ENCODE measurements at regions of chr1 and their contacts with region 1.

Region 1: DNA sequence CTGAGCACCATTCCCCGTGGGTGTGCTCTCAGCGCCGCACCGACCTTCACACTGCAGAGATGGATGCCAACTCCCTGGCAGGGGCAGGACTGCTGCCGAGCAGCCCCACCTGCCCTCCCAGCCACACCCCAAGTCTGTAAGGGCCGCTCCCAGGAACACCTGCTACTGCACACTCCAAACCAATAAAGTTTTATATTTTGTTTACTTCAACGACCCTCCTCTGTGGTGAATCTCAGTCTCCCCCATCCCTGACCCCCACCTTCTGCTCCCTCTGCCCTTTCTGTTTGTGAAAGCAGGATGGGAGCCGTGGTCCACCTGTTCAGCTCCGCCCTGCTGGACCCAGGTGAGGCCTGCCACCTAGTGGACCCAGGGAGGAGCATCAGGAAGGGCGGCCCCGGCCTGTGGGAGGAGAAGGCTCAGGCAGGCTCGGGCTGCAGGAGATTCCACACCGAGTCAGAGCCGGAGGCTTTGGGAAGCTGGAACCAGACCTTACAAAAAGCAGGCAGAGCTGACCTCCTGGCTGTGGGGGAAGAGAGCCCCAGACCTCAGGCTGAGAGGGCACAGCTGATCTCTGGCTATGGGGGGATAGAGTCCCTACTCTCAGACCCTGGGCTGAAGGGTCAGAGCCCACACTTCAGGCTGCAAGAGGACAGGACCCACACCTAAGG is 982 bp upstream of the TMEM82 start:
- DNase-seq: peak; percentile 63 to 88
- H3K4me3 ChIP-seq: no peak overlapping the region
- H3K27ac ChIP-seq: no peak overlapping the region
- H3K4me1 ChIP-seq: no peaks in the 10 kb centered on the region
- H3K27me3 ChIP-seq: no peaks in the 10 kb centered on the region
- CTCF ChIP-seq: peak; percentile 82

Region 2: DNA sequence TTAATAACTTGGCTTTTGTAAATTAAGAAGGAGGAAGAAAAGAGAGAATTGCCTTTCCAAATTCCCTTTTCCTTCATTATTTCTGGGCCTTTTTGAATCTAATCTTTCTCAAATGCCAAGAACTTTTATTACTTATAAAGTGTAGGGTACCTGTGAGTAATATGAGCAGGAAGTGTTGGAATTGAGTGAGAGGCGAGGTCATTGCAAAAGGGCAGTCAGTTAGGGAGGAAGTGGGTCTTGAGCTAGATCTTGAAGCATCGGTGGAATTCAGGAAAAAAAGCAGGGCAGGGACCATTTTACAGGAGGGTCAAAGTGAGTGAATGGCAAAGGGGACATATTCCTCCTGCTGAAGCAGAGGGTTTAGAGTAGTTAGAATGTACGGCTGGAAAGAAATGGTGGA is 100.7 kb before region 1 on chr1:
- CTCF ChIA-PET with region 1: no interaction called
- POLR2A ChIA-PET with region 1: no interaction called
- intact Hi-C with region 1: no loop called
- DNase-seq: no peak
- H3K4me3 ChIP-seq: no peak overlapping the region
- H3K27ac ChIP-seq: 0 out of 2 replicates have a peak overlapping the region, but pooled peaks have one; percentile 16
- H3K4me1 ChIP-seq: no peaks in the 10 kb centered on the region
- H3K27me3 ChIP-seq: no peaks in the 10 kb centered on the region
- CTCF ChIP-seq: no peak

Region 3: DNA sequence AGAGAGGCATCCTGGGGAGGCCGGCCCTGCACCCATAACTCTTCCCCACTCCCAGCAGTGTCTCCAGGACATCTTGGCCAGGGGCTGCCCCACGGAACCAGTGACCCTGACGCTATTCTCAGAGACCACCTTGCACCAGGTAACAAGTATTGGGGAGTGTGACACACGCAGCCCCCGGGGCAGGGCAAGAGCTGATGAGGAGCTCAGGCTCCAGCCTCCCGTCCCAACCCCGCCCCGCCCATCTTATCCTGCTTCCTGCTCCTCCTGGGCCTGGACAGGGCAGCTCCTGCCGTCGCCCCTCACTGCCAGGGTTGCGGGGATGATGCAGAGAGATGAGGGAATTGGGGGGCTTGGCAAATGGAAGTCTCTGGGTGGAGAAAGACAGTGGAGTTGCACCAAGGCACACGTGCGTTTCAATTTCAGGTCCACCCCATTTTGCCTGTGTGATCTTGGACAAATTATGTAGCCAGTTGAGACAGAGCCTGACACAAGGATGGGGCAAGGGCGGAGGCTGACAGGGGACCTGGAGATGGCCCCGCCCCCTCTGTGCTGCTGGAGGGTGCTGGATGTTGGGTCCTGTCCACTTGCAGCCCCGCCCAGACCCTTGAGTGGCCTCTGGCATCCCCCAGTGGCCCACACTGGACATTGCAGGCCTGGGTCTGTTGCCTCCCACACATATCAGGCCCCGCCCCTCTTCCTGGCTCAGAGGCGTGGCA is 291.2 kb after region 1 on chr1:
- CTCF ChIA-PET with region 1: no interaction called
- POLR2A ChIA-PET with region 1: no interaction called
- intact Hi-C with region 1: loop called (anchors 2 kb)
- DNase-seq: peak; percentile 64 to 89
- H3K4me3 ChIP-seq: no peak overlapping the region
- H3K27ac ChIP-seq: no peak overlapping the region
- H3K4me1 ChIP-seq: no peaks in the 10 kb centered on the region
- H3K27me3 ChIP-seq: no peaks in the 10 kb centered on the region
- CTCF ChIP-seq: peak; percentile 86

Measured in PC-9 (cell line).